HepG2 (cell line): ENCODE measurements at regions of chr4 and their contacts with region 1.

Region 1: GRCh38 chr4:89906777-89907521 is 12.3 kb downstream of the MMRN1 start:
- DNase-seq: no peak
- ATAC-seq: no peak
- H3K4me3 ChIP-seq: no peak overlapping the region
- H3K27ac ChIP-seq: no peak overlapping the region
- H3K4me1 ChIP-seq: no peaks in the 10 kb centered on the region
- H3K27me3 ChIP-seq: no peaks in the 10 kb centered on the region
- CTCF ChIP-seq: no peak
- EP300 ChIP-seq: no peak
- POLR2A ChIP-seq: no peak
- RAD21 ChIP-seq: no peak

Region 2: DNA sequence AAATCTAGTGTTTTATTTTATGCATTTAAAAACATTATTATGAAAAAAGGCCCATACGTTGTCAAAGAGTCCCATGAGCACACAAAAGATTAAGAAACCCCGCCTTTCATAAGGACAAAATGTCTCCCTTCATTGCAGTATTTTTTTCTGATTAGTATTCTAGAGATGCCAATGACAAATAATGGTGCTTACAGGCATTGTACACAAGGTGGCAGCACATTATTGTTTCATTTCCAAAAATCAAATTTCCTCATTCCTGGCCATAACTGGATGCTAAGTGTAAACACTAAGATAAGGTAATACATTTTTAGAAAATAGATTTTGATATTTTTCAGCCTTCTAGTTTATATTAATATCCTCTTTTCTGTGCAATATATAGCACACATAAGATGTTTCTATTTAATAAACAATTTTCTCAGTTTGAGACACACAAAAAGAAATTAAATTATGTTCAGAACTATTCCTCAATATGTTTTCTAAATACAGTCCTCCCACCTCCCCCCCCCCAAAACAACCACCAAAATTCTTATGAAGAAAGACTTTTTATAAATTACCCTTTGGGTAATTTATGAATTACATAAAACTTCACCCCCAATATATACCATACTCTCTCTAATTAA is 748.0 kb before region 1 on chr4:
- CTCF ChIA-PET with region 1: no interaction called
- POLR2A ChIA-PET with region 1: no interaction called
- in situ Hi-C with region 1: no loop called
- intact Hi-C with region 1: loop called (anchors 5 kb)
- DNase-seq: peak; percentile 6
- ATAC-seq: peak; percentile 22; the same call in 1 of the 3 replicates
- H3K4me3 ChIP-seq: no peak overlapping the region
- H3K27ac ChIP-seq: no peak overlapping the region
- H3K4me1 ChIP-seq: no peaks in the 10 kb centered on the region
- H3K27me3 ChIP-seq: no peaks in the 10 kb centered on the region
- CTCF ChIP-seq: peak; percentile 66
- EP300 ChIP-seq: no peak
- POLR2A ChIP-seq: no peak
- RAD21 ChIP-seq: no peak

Region 3: GRCh38 chr4:89254847-89255246 is 652.1 kb before region 1 on chr4:
- CTCF ChIA-PET with region 1: no interaction called
- POLR2A ChIA-PET with region 1: no interaction called
- in situ Hi-C with region 1: no loop called
- intact Hi-C with region 1: loop called (anchors 10 kb)
- DNase-seq: peak; percentile 12
- ATAC-seq: peak; percentile 74
- H3K4me3 ChIP-seq: no peak overlapping the region
- H3K27ac ChIP-seq: no peak overlapping the region
- H3K4me1 ChIP-seq: no peaks in the 10 kb centered on the region
- H3K27me3 ChIP-seq: no peaks in the 10 kb centered on the region
- CTCF ChIP-seq: peak; percentile 65
- EP300 ChIP-seq: no peak
- POLR2A ChIP-seq: no peak
- RAD21 ChIP-seq: no peak

Region 4: DNA sequence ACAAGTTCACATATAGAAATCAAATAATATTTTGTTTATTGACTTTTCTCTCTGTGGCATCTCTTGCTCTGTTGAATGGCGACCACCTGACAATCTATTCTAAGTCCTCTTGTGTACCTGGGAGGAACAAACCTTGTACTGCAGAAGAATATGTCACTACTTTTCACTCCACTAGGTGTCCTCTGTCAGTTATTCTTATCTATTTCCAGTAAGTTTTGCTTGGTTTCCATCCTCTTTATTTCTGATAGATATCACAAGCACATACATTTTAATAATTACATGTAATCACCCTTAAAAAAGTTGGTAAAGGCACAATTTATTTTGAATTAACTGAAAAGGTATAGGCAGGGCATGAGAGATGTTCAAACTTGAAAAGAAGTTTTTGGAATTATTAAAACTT is 308.3 kb before region 1 on chr4:
- CTCF ChIA-PET with region 1: no interaction called
- POLR2A ChIA-PET with region 1: no interaction called
- in situ Hi-C with region 1: loop called (anchors 10 kb)
- intact Hi-C with region 1: loop called (anchors 1 kb)
- DNase-seq: peak; percentile 15
- ATAC-seq: peak; percentile 69
- H3K4me3 ChIP-seq: no peak overlapping the region
- H3K27ac ChIP-seq: no peak overlapping the region
- H3K4me1 ChIP-seq: no peaks in the 10 kb centered on the region
- H3K27me3 ChIP-seq: no peaks in the 10 kb centered on the region
- CTCF ChIP-seq: peak; percentile 42
- EP300 ChIP-seq: no peak
- POLR2A ChIP-seq: no peak
- RAD21 ChIP-seq: no peak

Region 5: GRCh38 chr4:89640620-89641366 is 266.2 kb before region 1 on chr4:
- CTCF ChIA-PET with region 1: interaction called, 10 read pairs
- POLR2A ChIA-PET with region 1: no interaction called
- in situ Hi-C with region 1: no loop called
- intact Hi-C with region 1: loop called (anchors 5 kb)
- DNase-seq: peak; percentile 80
- ATAC-seq: peak; percentile 99
- H3K4me3 ChIP-seq: peak overlapping the region; percentile 51 to 68 (median 59)
- H3K27ac ChIP-seq: peak overlapping the region; percentile 27
- H3K4me1 ChIP-seq: peaks cover 11% of the 10 kb centered on the region
- H3K27me3 ChIP-seq: no peaks in the 10 kb centered on the region
- CTCF ChIP-seq: peak; percentile 90
- EP300 ChIP-seq: no peak
- POLR2A ChIP-seq: no peak
- RAD21 ChIP-seq: peak; percentile 71

Region 6: GRCh38 chr4:89657931-89658700 is 248.8 kb before region 1 on chr4:
- CTCF ChIA-PET with region 1: interaction called, 11 read pairs
- POLR2A ChIA-PET with region 1: no interaction called
- in situ Hi-C with region 1: loop called (anchors 10 kb)
- intact Hi-C with region 1: loop called (anchors 5 kb)
- DNase-seq: peak; percentile 28
- ATAC-seq: no peak; the same call in 2 of the 3 replicates
- H3K4me3 ChIP-seq: no peak overlapping the region
- H3K27ac ChIP-seq: no peak overlapping the region
- H3K4me1 ChIP-seq: 0 out of 2 replicates have a peak, but pooled peaks cover 4% of the 10 kb centered on the region
- H3K27me3 ChIP-seq: peaks cover 0 to 5% of the 10 kb centered on the region in 2 experiments; a peak in 1 of 5 replicates
- CTCF ChIP-seq: peak; percentile 64
- EP300 ChIP-seq: no peak
- POLR2A ChIP-seq: no peak
- RAD21 ChIP-seq: no peak